Endothelial cell of umbilical vein (primary cell): ENCODE measurements at regions of chr1 and their contacts with region 1.

Region 1: DNA sequence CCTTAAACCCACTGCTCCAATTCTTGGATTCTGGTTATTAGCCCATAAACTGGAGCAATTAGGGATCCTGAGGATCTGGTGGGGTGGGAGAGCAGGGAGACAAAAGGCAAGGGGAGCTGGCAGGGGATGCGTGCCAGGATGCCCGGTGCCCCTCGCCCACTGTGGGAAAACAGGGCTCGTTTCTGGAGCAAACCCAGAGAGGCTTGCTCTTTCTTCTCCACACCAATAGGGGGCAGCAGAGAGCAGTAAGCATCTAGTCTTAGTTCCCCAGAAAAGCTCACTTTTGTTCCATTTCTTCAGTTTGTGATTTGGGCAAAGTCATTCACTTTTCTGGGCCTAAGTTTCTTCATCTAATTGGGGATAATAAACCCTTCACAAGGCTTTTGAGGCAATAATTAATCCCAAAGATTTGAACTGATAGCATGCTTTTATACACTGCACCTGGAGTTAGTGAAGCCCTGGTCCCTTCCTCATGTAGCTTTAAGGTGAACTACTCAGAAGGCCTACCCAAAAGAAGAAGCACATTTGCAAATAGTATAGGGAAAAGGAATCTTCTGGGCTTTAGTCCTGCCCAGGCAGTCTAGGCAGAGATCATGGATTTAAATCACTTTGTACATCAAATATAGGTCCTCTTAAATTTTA is 160.6 kb upstream of the USP24 start:
- DNase-seq: peak; percentile 41
- H3K4me3 ChIP-seq: no peak overlapping the region
- H3K27ac ChIP-seq: no peak overlapping the region
- H3K4me1 ChIP-seq: no peaks in the 10 kb centered on the region
- H3K27me3 ChIP-seq: no peaks in the 10 kb centered on the region
- CTCF ChIP-seq: peak; percentile 87 to 96
- POLR2A ChIP-seq: no peak

Region 2: DNA sequence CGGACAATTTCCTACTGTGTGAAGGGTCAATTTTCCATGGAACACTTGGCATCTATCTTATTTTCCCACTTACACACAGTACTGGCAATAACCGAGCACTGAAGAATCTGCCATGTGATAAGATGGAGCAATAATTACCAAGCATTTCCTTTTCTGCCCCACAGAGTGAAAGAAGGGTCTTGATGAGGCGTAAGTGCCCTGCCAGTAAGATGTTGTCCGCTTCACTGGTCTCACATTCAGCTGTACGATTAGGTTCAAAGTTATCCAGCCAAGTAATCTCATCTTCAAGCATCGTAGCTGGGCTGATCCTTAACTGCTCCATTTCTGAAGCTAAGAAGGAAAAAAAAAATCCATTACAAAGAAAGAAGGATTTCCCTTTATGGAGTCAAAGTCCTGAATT is 268.6 kb before region 1 on chr1:
- CTCF ChIA-PET with region 1: no interaction called
- POLR2A ChIA-PET with region 1: no interaction called
- dilution Hi-C with region 1: no loop called
- intact Hi-C with region 1: no loop called
- DNase-seq: no peak
- H3K4me3 ChIP-seq: no peak overlapping the region
- H3K27ac ChIP-seq: no peak overlapping the region
- H3K4me1 ChIP-seq: no peaks in the 10 kb centered on the region
- H3K27me3 ChIP-seq: no peaks in the 10 kb centered on the region
- CTCF ChIP-seq: no peak
- POLR2A ChIP-seq: no peak

Region 3: DNA sequence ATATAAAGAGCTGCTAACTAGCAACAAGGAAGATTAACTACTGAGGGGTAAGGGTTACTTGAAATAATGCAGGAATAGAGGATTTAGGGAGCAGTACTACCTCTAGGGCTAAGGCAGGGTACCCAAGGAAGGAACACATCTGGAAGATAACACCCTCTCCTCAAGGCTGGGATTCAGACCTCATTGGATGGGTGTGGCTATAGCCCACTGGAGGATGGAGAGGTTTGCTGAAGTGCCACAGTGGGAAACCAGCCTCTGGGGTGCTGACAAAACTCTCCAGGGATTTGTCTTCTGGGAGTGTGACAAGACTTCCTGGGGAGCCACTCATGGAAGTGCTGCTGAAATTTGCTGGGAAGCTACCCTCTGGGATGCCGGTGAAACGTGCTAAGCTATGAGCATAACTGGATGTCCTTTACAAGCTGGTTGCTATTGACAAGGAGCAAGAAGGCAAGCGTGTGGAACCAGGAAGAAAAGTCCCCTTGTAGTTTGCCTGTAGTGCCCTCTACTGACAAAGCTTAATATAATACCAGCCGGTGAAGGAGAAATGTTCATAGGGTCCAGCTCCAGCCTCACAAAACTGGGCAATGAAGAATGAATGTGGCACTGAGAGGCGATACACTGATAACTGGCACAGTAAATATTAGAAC is 37.8 kb before region 1 on chr1:
- CTCF ChIA-PET with region 1: interaction called, 30 read pairs
- POLR2A ChIA-PET with region 1: no interaction called
- dilution Hi-C with region 1: no loop called
- intact Hi-C with region 1: no loop called
- DNase-seq: peak; percentile 79
- H3K4me3 ChIP-seq: no peak overlapping the region
- H3K27ac ChIP-seq: no peak overlapping the region
- H3K4me1 ChIP-seq: peaks cover 16% of the 10 kb centered on the region
- H3K27me3 ChIP-seq: no peaks in the 10 kb centered on the region
- CTCF ChIP-seq: peak; percentile 52 to 63
- POLR2A ChIP-seq: no peak

Region 4: DNA sequence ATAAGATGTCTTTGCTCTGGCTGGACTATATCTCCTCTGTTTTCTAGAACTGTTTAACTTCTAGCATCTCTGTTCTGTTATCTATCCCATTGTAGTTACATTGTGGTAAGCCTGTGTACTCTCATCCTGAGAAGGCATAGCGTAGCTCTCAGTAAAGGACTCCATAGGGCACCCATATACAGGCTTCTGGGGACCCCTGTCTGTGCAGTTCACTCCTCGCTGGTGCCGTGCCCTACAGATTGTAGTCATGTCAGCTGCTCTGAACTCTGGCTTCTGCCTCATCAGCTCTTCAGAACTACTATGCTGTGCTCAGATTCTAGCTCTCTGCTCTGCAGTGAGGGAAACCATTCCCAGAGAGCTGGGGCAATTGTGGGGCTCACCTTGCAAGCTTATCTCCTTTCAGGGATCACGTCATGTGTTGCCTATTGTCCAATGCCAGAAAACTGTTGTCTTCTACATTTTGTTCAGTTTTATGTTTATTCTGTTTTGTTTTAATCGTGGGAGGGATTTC is 20.7 kb after region 1 on chr1:
- CTCF ChIA-PET with region 1: interaction called, 16 read pairs
- POLR2A ChIA-PET with region 1: no interaction called
- dilution Hi-C with region 1: no loop called
- intact Hi-C with region 1: no loop called
- DNase-seq: no peak
- H3K4me3 ChIP-seq: no peak overlapping the region
- H3K27ac ChIP-seq: no peak overlapping the region
- H3K4me1 ChIP-seq: no peaks in the 10 kb centered on the region
- H3K27me3 ChIP-seq: no peaks in the 10 kb centered on the region
- CTCF ChIP-seq: no peak
- POLR2A ChIP-seq: no peak

Region 5: DNA sequence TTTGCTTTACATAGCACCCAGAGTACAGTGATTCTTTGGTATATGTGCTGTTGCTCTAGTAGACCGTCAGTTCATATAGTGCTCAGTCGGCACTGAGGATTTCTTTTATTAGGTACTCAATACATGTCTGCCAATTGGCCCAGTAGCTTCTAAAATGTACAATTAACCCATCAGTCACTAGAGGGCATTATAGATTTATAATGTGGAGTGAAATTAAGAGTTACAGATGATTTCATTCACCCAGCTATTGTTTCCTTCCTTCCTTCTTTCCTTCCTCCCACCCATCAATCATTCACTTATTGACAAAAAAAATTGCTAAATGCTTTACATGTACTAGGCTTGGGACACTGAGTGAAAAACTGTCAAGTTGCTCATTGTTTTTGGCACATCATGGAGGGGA is 103.0 kb after region 1 on chr1:
- CTCF ChIA-PET with region 1: interaction called, 48 read pairs
- POLR2A ChIA-PET with region 1: no interaction called
- dilution Hi-C with region 1: no loop called
- intact Hi-C with region 1: loop called (anchors 2 kb)
- DNase-seq: peak; percentile 68
- H3K4me3 ChIP-seq: no peak overlapping the region
- H3K27ac ChIP-seq: no peak overlapping the region
- H3K4me1 ChIP-seq: peaks cover 19% of the 10 kb centered on the region
- H3K27me3 ChIP-seq: no peaks in the 10 kb centered on the region
- CTCF ChIP-seq: peak in 1 of 2 donors; percentile 19
- POLR2A ChIP-seq: no peak

Region 6: DNA sequence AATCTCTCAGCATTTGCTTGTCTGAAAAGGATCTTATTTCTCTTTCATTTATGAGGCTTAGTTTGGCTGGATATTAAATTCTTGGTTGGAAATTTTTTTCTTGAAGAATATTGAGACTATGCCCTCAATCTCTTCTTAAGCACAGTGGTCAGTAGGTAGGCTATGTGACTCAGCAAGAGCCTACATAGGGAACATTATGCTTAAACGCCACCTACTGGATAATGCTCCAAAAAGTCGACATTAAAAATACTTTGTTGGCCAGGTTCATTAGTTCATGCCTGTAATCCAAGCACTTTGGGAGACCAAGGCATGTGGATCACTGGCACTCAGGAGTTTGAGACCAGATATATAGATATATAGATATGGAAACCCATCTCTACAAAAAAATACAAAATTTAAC is 517.4 kb after region 1 on chr1:
- CTCF ChIA-PET with region 1: interaction called, 18 read pairs
- POLR2A ChIA-PET with region 1: no interaction called
- dilution Hi-C with region 1: no loop called
- intact Hi-C with region 1: loop called (anchors 5 kb)
- DNase-seq: peak; percentile 56
- H3K4me3 ChIP-seq: no peak overlapping the region
- H3K27ac ChIP-seq: no peak overlapping the region
- H3K4me1 ChIP-seq: no peaks in the 10 kb centered on the region
- H3K27me3 ChIP-seq: no peaks in the 10 kb centered on the region
- CTCF ChIP-seq: peak; percentile 22 to 27
- POLR2A ChIP-seq: no peak

Region 7: GRCh38 chr1:56709269-56709880 is 1333.6 kb after region 1 on chr1:
- CTCF ChIA-PET with region 1: interaction called, 16 read pairs
- POLR2A ChIA-PET with region 1: no interaction called
- dilution Hi-C with region 1: no loop called
- intact Hi-C with region 1: loop called (anchors 1 kb)
- DNase-seq: peak; percentile 69
- H3K4me3 ChIP-seq: no peak overlapping the region
- H3K27ac ChIP-seq: no peak overlapping the region
- H3K4me1 ChIP-seq: peaks cover 2% of the 10 kb centered on the region
- H3K27me3 ChIP-seq: no peaks in the 10 kb centered on the region
- CTCF ChIP-seq: peak; percentile 32 to 42
- POLR2A ChIP-seq: no peak